Activated CD4-positive, alpha-beta memory T cell treated with anti-CD3 and anti-CD28 coated beads, Interleukin-2, amount 10 ng/mL, durations not matched to agents 7 days and 5 days (primary cell): ENCODE measurements at regions of chr15 and their contacts with region 1.

Region 1: DNA sequence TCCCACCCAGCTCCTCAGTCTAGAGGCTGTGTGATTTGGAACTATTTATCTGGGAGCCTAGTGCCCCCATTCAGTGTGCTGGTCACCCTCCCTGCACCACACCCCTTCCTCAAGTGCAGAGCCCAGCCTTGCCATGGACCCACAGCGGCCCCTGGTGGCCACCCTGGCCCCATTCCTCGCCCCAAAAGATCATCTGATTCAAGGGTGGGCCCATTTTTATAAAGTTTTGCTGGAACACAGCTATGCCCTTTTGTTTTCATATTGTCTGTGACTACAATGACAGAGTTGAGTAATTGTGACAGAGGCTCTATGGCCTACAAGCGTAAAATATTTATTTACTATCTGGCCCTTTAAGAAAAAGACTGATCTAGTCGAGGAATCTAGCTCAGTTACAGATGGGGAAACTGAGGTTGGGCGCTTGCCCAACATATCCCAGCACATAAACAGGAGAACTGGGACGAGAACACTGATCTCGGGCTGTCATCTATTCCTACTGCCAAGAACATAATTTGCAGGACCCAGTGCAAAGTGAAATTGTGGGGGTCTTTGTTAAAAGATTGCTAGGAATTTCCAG is 1.8 kb downstream of the FES start:
- DNase-seq: peak; percentile 83
- H3K4me3 Mint-ChIP-seq: no peak overlapping the region
- H3K27ac Mint-ChIP-seq: peak overlapping the region; percentile 78
- H3K4me1 Mint-ChIP-seq: peaks cover 57% of the 10 kb centered on the region
- H3K27me3 Mint-ChIP-seq: no peaks in the 10 kb centered on the region

Region 2: DNA sequence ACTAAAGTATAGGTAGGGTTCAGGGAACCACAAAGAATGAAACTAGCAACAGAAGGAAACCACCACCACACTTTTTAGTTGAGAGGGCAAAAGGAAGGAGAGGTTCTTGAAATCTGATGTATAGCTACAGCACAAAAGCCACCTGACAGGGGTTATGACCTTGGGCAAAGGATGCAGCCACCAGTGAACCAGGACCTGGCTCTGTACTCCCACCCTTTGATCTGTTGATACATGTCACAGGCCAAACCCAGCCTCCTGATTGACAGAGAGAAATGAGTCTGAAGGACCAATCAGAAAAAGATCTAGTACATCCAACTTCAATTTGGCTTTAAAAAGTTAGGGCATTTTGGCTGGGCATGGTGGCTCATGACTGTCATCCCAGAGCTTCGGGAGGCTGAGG is 188.9 kb before region 1 on chr15:
- CTCF ChIA-PET with region 1: interaction called, 10 read pairs
- POLR2A ChIA-PET with region 1: interaction called, 3 read pairs
- DNase-seq: peak; percentile 70
- H3K4me3 Mint-ChIP-seq: no peak overlapping the region
- H3K27ac Mint-ChIP-seq: peak overlapping the region; percentile 86
- H3K4me1 Mint-ChIP-seq: peaks cover 51% of the 10 kb centered on the region
- H3K27me3 Mint-ChIP-seq: no peaks in the 10 kb centered on the region

Region 3: GRCh38 chr15:90818251-90819210 is 67.6 kb before region 1 on chr15:
- CTCF ChIA-PET with region 1: interaction called, 17 read pairs
- POLR2A ChIA-PET with region 1: interaction called, 21 read pairs
- DNase-seq: peak; percentile 62
- H3K4me3 Mint-ChIP-seq: peak overlapping the region; percentile 18
- H3K27ac Mint-ChIP-seq: peak overlapping the region; percentile 93
- H3K4me1 Mint-ChIP-seq: peaks cover 80% of the 10 kb centered on the region
- H3K27me3 Mint-ChIP-seq: no peaks in the 10 kb centered on the region

Region 4: GRCh38 chr15:90869601-90870353 is 16.4 kb before region 1 on chr15:
- CTCF ChIA-PET with region 1: interaction called, 8 read pairs
- POLR2A ChIA-PET with region 1: interaction called, 23 read pairs
- DNase-seq: peak; percentile 63
- H3K4me3 Mint-ChIP-seq: peak overlapping the region; percentile 85
- H3K27ac Mint-ChIP-seq: peak overlapping the region; percentile 91
- H3K4me1 Mint-ChIP-seq: peaks cover 59% of the 10 kb centered on the region
- H3K27me3 Mint-ChIP-seq: no peaks in the 10 kb centered on the region

Region 5: DNA sequence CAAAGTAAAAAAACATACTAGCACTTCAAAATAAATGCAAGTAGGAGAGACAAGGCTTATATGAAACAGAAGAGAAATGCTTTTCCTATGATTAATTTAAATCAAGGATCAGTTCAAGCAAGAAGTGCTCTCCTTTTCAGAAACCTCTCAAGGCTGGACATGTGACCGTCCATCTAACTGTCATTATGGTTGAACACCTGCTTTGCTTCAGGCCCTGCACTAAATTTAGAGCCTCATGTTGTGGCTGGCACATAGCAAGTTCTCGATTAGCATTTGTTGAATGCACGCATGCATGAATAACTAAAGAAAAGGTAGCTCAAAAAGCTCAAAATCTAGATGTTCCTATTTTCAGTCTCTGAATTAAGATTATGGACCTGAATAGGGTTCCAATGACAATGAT is 296.0 kb after region 1 on chr15:
- CTCF ChIA-PET with region 1: no interaction called
- POLR2A ChIA-PET with region 1: no interaction called
- DNase-seq: no peak
- H3K4me3 Mint-ChIP-seq: no peak overlapping the region
- H3K27ac Mint-ChIP-seq: no peak overlapping the region
- H3K4me1 Mint-ChIP-seq: no peaks in the 10 kb centered on the region
- H3K27me3 Mint-ChIP-seq: peaks cover 22% of the 10 kb centered on the region

Region 6: GRCh38 chr15:91357011-91357410 is 470.9 kb after region 1 on chr15:
- CTCF ChIA-PET with region 1: no interaction called
- POLR2A ChIA-PET with region 1: no interaction called
- DNase-seq: no peak
- H3K4me3 Mint-ChIP-seq: no peak overlapping the region
- H3K27ac Mint-ChIP-seq: no peak overlapping the region
- H3K4me1 Mint-ChIP-seq: no peaks in the 10 kb centered on the region
- H3K27me3 Mint-ChIP-seq: peaks cover 4% of the 10 kb centered on the region